A673 (cell line): ENCODE measurements at regions of chr7 and their contacts with region 1.

Region 1: GRCh38 chr7:102024769-102025391 is 207.5 kb downstream of the CUX1 start:
- DNase-seq: no peak
- H3K4me3 ChIP-seq: no peak overlapping the region
- H3K27ac ChIP-seq: no peak overlapping the region
- H3K4me1 ChIP-seq: no peaks in the 10 kb centered on the region
- H3K27me3 ChIP-seq: no peaks in the 10 kb centered on the region
- CTCF ChIP-seq: no peak

Region 2: GRCh38 chr7:102069913-102070629 is 45.2 kb after region 1 on chr7:
- CTCF ChIA-PET with region 1: interaction called, 10 read pairs
- POLR2A ChIA-PET with region 1: no interaction called
- intact Hi-C with region 1: no loop called
- DNase-seq: no peak
- H3K4me3 ChIP-seq: no peak overlapping the region
- H3K27ac ChIP-seq: no peak overlapping the region
- H3K4me1 ChIP-seq: no peaks in the 10 kb centered on the region
- H3K27me3 ChIP-seq: no peaks in the 10 kb centered on the region
- CTCF ChIP-seq: 0 out of 2 replicates have a peak, but pooled peaks have one; percentile 19